Gastrocnemius medialis (tissue), 4 donors: ENCODE measurements at regions of chr9 and their contacts with region 1.

Region 1: GRCh38 chr9:113401027-113401792 is at the start of gene ALAD:
- DNase-seq: peak; percentile 96 to 99
- ATAC-seq: peak; percentile 95 to 98
- H3K4me3 ChIP-seq: peak within 1 kb of the TSS; percentile 86 to 98 (median 90)
- H3K27ac ChIP-seq: peak within 1 kb of the TSS; percentile 70 to 86 (median 80)
- H3K4me1 ChIP-seq: peaks cover 20 to 26% of the 10 kb centered on the region in 2 donors
- H3K27me3 ChIP-seq: no peaks in the 10 kb centered on the region
- CTCF ChIP-seq: peak; percentile 92 to 97 (median 94)
- POLR2A ChIP-seq: peak; percentile 27 to 38
- total RNA-seq, gene ALAD: 8.9 to 16.2 (median 12.3) TPM

Region 2: GRCh38 chr9:113331780-113332179 is 69.4 kb before region 1 on chr9:
- in situ Hi-C with region 1: loop called in 1 of 4 experiments (anchors 10 kb)
- intact Hi-C with region 1: no loop called
- DNase-seq: no peak
- ATAC-seq: no peak
- H3K4me3 ChIP-seq: no peak overlapping the region
- H3K27ac ChIP-seq: no peak overlapping the region
- H3K4me1 ChIP-seq: no peaks in the 10 kb centered on the region
- H3K27me3 ChIP-seq: no peaks in the 10 kb centered on the region
- CTCF ChIP-seq: no peak
- POLR2A ChIP-seq: no peak

Region 3: GRCh38 chr9:113340017-113340699 is 61.1 kb before region 1 on chr9 and contains the start of gene WDR31:
- in situ Hi-C with region 1: loop called in 1 of 4 experiments (anchors 10 kb)
- intact Hi-C with region 1: loop called (anchors 5 kb)
- DNase-seq: peak; percentile 68 to 76
- ATAC-seq: peak; percentile 95 to 97
- H3K4me3 ChIP-seq: peak within 1 kb of the TSS; percentile 67 to 96 (median 87)
- H3K27ac ChIP-seq: peak within 1 kb of the TSS; percentile 60 to 77 (median 70)
- H3K4me1 ChIP-seq: peaks cover 9 to 20% of the 10 kb centered on the region in 2 donors
- H3K27me3 ChIP-seq: no peaks in the 10 kb centered on the region
- CTCF ChIP-seq: no peak
- POLR2A ChIP-seq: peak in 1 of 2 donors; percentile 26
- total RNA-seq, gene WDR31: 0.29 to 1.1 (median 0.36) TPM in 3 of 4 donors, not detected in the other

Region 4: GRCh38 chr9:113376634-113377567 is 24.3 kb before region 1 on chr9 and contains the start of gene HDHD3:
- in situ Hi-C with region 1: no loop called
- intact Hi-C with region 1: loop called (anchors 2 kb)
- DNase-seq: peak; percentile 67 to 73
- ATAC-seq: peak; percentile 95 to 96
- H3K4me3 ChIP-seq: peak within 1 kb of the TSS; percentile 65 to 95 (median 89)
- H3K27ac ChIP-seq: peak within 1 kb of the TSS; percentile 75 to 87 (median 78)
- H3K4me1 ChIP-seq: peaks cover 8 to 10% of the 10 kb centered on the region in 2 donors
- H3K27me3 ChIP-seq: no peaks in the 10 kb centered on the region
- CTCF ChIP-seq: no peak
- POLR2A ChIP-seq: peak; percentile 30 to 64
- total RNA-seq, gene HDHD3: 10.3 to 16.2 (median 14.1) TPM

Region 5: GRCh38 chr9:113523421-113524236 is 122.4 kb after region 1 on chr9:
- in situ Hi-C with region 1: no loop called
- intact Hi-C with region 1: no loop called
- DNase-seq: peak; percentile 28 to 43
- ATAC-seq: peak; percentile 4 to 35
- H3K4me3 ChIP-seq: peak overlapping the region in 1 of 4 donors; percentile 8
- H3K27ac ChIP-seq: peak overlapping the region; percentile 74 to 79 (median 76)
- H3K4me1 ChIP-seq: peaks cover 62% of the 10 kb centered on the region in 2 donors
- H3K27me3 ChIP-seq: no peaks in the 10 kb centered on the region
- CTCF ChIP-seq: no peak
- POLR2A ChIP-seq: no peak